ENCODE measurements at regions of chr14 and their contacts with region 1.

Region 1: GRCh38 chr14:22099942-22100763 is 426.5 kb upstream of the OR4E1 start:
- DNase-seq: peak; percentile 75
- ATAC-seq: peak; percentile 100
- H3K4me3 Mint-ChIP-seq: no peak overlapping the region
- H3K27ac Mint-ChIP-seq: no peak overlapping the region
- H3K4me1 Mint-ChIP-seq: no peaks in the 10 kb centered on the region
- H3K27me3 Mint-ChIP-seq: peaks cover 10% of the 10 kb centered on the region
- CTCF ChIP-seq: 0 out of 2 replicates have a peak, but pooled peaks have one; percentile 16

Region 2: GRCh38 chr14:22002860-22003309 is 97.3 kb before region 1 on chr14:
- CTCF ChIA-PET with region 1: interaction called, 40 read pairs
- POLR2A ChIA-PET with region 1: no interaction called
- DNase-seq: peak; percentile 76
- ATAC-seq: peak; percentile 85
- H3K4me3 Mint-ChIP-seq: no peak overlapping the region
- H3K27ac Mint-ChIP-seq: no peak overlapping the region
- H3K4me1 Mint-ChIP-seq: no peaks in the 10 kb centered on the region; the same call in 1 of the 2 replicates
- H3K27me3 Mint-ChIP-seq: peaks cover 14% of the 10 kb centered on the region
- CTCF ChIP-seq: peak; percentile 58

Region 3: GRCh38 chr14:22070119-22071011 is 29.8 kb before region 1 on chr14:
- CTCF ChIA-PET with region 1: interaction called, 14 read pairs
- POLR2A ChIA-PET with region 1: no interaction called
- DNase-seq: peak; percentile 41
- ATAC-seq: peak; percentile 94
- H3K4me3 Mint-ChIP-seq: peak overlapping the region; percentile 68
- H3K27ac Mint-ChIP-seq: peak overlapping the region; percentile 10; the same call in 1 of the 2 replicates
- H3K4me1 Mint-ChIP-seq: peaks cover 11% of the 10 kb centered on the region
- H3K27me3 Mint-ChIP-seq: peaks cover 11% of the 10 kb centered on the region
- CTCF ChIP-seq: no peak

Region 4: DNA sequence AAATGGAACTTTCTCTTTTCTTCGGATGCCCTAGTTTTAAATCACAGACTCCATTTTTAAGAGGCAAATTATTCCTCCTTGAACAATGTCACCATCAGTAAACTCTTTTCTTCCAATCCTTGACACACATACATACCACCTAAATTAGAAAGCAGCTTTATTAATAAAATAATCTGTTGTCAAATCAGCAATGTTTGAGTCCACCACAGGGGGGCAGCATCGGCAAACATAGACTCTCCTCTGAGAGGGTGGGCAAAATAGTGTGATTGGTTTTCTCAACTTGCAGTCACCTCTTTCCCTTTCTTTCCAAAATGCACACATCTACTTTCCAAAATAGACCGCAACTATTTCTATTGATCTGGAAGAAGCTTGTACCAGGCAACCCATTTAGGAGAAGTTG is 11.9 kb after region 1 on chr14:
- CTCF ChIA-PET with region 1: interaction called, 28 read pairs
- POLR2A ChIA-PET with region 1: no interaction called
- DNase-seq: peak; percentile 63
- ATAC-seq: no peak
- H3K4me3 Mint-ChIP-seq: no peak overlapping the region
- H3K27ac Mint-ChIP-seq: no peak overlapping the region
- H3K4me1 Mint-ChIP-seq: peaks cover 18% of the 10 kb centered on the region
- H3K27me3 Mint-ChIP-seq: 0 out of 2 replicates have a peak, but pooled peaks cover 4% of the 10 kb centered on the region
- CTCF ChIP-seq: peak; percentile 49

Measured in WTC11 (cell line).